ENCODE measurements at regions of chr14 and their contacts with region 1.

Region 1: GRCh38 chr14:81269100-81269978 is 48.6 kb upstream of the GTF2A1 start:
- DNase-seq: peak; percentile 70
- ATAC-seq: peak; percentile 95
- H3K4me3 ChIP-seq: no peak overlapping the region
- H3K27ac ChIP-seq: no peak overlapping the region
- H3K4me1 ChIP-seq: peaks cover 6% of the 10 kb centered on the region; the same call in 1 of the 2 replicates
- H3K27me3 ChIP-seq: no peaks in the 10 kb centered on the region
- CTCF ChIP-seq: peak; percentile 83
- EP300 ChIP-seq: no peak
- POLR2A ChIP-seq: no peak
- RAD21 ChIP-seq: peak; percentile 76

Region 2: GRCh38 chr14:81303248-81304221 is 34.2 kb after region 1 on chr14:
- CTCF ChIA-PET with region 1: no interaction called
- POLR2A ChIA-PET with region 1: interaction called, 4 read pairs
- in situ Hi-C with region 1: no loop called
- intact Hi-C with region 1: loop called (anchors 2 kb)
- DNase-seq: peak; percentile 98
- ATAC-seq: peak; percentile 97
- H3K4me3 ChIP-seq: peak overlapping the region; percentile 26 to 51 (median 39); a peak in 4 of 6 replicates
- H3K27ac ChIP-seq: peak overlapping the region; percentile 91
- H3K4me1 ChIP-seq: peaks cover 42% of the 10 kb centered on the region
- H3K27me3 ChIP-seq: no peaks in the 10 kb centered on the region
- CTCF ChIP-seq: no peak
- EP300 ChIP-seq: peak; percentile 61 to 91; a peak in 3 of 4 replicates
- POLR2A ChIP-seq: peak in 1 of 2 experiments; percentile 55; a peak in 1 of 4 replicates
- RAD21 ChIP-seq: no peak; the same call in 1 of the 2 replicates

Region 3: GRCh38 chr14:81436296-81437138 is 167.2 kb after region 1 on chr14:
- CTCF ChIA-PET with region 1: interaction called, 3 read pairs
- POLR2A ChIA-PET with region 1: no interaction called
- in situ Hi-C with region 1: no loop called
- intact Hi-C with region 1: loop called (anchors 1 kb)
- DNase-seq: peak; percentile 54
- ATAC-seq: peak; percentile 93
- H3K4me3 ChIP-seq: peak overlapping the region; percentile 48 to 84 (median 71)
- H3K27ac ChIP-seq: no peak overlapping the region
- H3K4me1 ChIP-seq: peaks cover 22% of the 10 kb centered on the region
- H3K27me3 ChIP-seq: no peaks in the 10 kb centered on the region; a peak in 2 of 5 replicates
- CTCF ChIP-seq: no peak
- EP300 ChIP-seq: no peak
- POLR2A ChIP-seq: peak in 1 of 2 experiments; percentile 50; a peak in 2 of 4 replicates
- RAD21 ChIP-seq: 0 out of 2 replicates have a peak, but pooled peaks have one; percentile 42

Region 4: GRCh38 chr14:81453166-81453766 is 183.9 kb after region 1 on chr14:
- CTCF ChIA-PET with region 1: interaction called, 59 read pairs
- POLR2A ChIA-PET with region 1: interaction called, 3 read pairs
- in situ Hi-C with region 1: loop called (anchors 5 kb)
- intact Hi-C with region 1: loop called (anchors 1 kb)
- DNase-seq: peak; percentile 47
- ATAC-seq: peak; percentile 74
- H3K4me3 ChIP-seq: peak overlapping the region in 2 of 3 experiments; percentile 32 to 42; a peak in 3 of 6 replicates
- H3K27ac ChIP-seq: no peak overlapping the region
- H3K4me1 ChIP-seq: peaks cover 43% of the 10 kb centered on the region
- H3K27me3 ChIP-seq: no peaks in the 10 kb centered on the region
- CTCF ChIP-seq: peak; percentile 83
- EP300 ChIP-seq: no peak
- POLR2A ChIP-seq: no peak
- RAD21 ChIP-seq: peak; percentile 83

Region 5: DNA sequence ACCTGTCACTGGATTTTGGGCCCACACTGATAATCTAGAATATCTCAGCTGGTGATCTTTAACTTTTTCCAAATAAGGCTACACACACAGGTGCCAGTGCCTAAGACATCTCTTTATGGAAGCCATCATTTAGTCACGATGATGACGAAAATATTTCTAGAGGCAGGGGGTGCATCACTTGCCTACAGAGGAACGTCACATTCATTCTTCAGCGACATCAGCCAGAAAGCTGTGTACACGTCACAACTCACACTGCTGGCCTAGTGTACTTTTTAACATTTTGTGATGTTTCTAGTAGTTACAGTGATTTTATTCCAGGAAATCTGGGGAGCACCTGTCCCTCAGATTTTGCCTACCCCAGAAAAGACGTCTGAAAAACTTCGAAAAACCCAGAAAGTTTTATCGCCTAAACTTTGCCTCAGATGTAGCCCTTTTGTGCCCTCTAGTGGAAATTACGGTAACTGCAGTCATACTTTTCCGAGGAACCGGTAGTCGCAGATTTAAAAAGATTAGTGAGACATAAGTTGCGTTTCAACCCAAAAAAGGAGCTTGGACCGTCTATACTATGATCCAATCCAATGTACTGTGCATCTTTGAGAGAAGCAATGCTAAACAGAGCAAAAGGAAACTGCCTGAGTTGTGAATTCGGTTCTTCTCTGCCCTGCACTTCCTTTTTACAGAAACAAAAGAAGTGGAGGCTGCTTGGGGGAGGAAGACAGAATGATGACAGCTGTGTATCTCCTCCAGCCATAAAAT is 195.1 kb after region 1 on chr14:
- CTCF ChIA-PET with region 1: interaction called, 38 read pairs
- POLR2A ChIA-PET with region 1: no interaction called
- in situ Hi-C with region 1: no loop called
- intact Hi-C with region 1: loop called (anchors 1 kb)
- DNase-seq: peak; percentile 53
- ATAC-seq: 0 out of 3 replicates have a peak, but pooled peaks have one; percentile 18
- H3K4me3 ChIP-seq: peak overlapping the region; percentile 63 to 71 (median 65); a peak in 5 of 6 replicates
- H3K27ac ChIP-seq: no peak overlapping the region
- H3K4me1 ChIP-seq: peaks cover 29% of the 10 kb centered on the region
- H3K27me3 ChIP-seq: no peaks in the 10 kb centered on the region
- CTCF ChIP-seq: peak; percentile 83
- EP300 ChIP-seq: no peak
- POLR2A ChIP-seq: no peak
- RAD21 ChIP-seq: peak; percentile 67

Measured in HepG2 (cell line).